ENCODE measurements at regions of chr22 and their contacts with region 1.

Region 1: GRCh38 chr22:39003165-39003638 is 10.9 kb upstream of the APOBEC3C start:
- DNase-seq: peak; percentile 54 to 69
- ATAC-seq: peak; percentile 83 to 94 (median 92)
- H3K4me3 ChIP-seq: no peak overlapping the region
- H3K27ac ChIP-seq: no peak overlapping the region
- H3K4me1 ChIP-seq: peaks cover 0 to 9% (median 7%) of the 10 kb centered on the region in 9 donors
- H3K27me3 ChIP-seq: peaks cover 0 to 11% (median 0%) of the 10 kb centered on the region in 7 donors
- CTCF ChIP-seq: peak; percentile 59 to 88 (median 79)

Region 2: GRCh38 chr22:38753948-38754750 is 249.1 kb before region 1 on chr22:
- intact Hi-C with region 1: no loop called
- DNase-seq: peak in 1 of 2 donors; percentile 57
- ATAC-seq: peak in 6 of 8 donors; percentile 5 to 43 (median 38)
- H3K4me3 ChIP-seq: peak overlapping the region; percentile 36 to 82 (median 71)
- H3K27ac ChIP-seq: peak overlapping the region; percentile 93 to 99 (median 96)
- H3K4me1 ChIP-seq: peaks cover 2 to 73% (median 29%) of the 10 kb centered on the region in 9 donors
- H3K27me3 ChIP-seq: no peaks in the 10 kb centered on the region
- CTCF ChIP-seq: no peak

Region 3: GRCh38 chr22:38766076-38766777 is 237.0 kb before region 1 on chr22:
- intact Hi-C with region 1: loop called in 7 of 10 experiments (anchors 2 to 10 kb)
- DNase-seq: peak in 1 of 2 donors; percentile 41
- ATAC-seq: peak in 3 of 8 donors; percentile 18 to 52 (median 37)
- H3K4me3 ChIP-seq: no peak overlapping the region
- H3K27ac ChIP-seq: no peak overlapping the region
- H3K4me1 ChIP-seq: peaks cover 0 to 4% (median 0%) of the 10 kb centered on the region in 9 donors
- H3K27me3 ChIP-seq: peaks cover 0 to 7% (median 0%) of the 10 kb centered on the region in 7 donors
- CTCF ChIP-seq: peak; percentile 28 to 74 (median 64)

Region 4: GRCh38 chr22:38777087-38777671 is 226.0 kb before region 1 on chr22:
- intact Hi-C with region 1: loop called in 1 of 10 experiments (anchors 5 kb)
- DNase-seq: no peak
- ATAC-seq: no peak
- H3K4me3 ChIP-seq: no peak overlapping the region
- H3K27ac ChIP-seq: no peak overlapping the region
- H3K4me1 ChIP-seq: peaks cover 4 to 22% (median 18%) of the 10 kb centered on the region in 9 donors
- H3K27me3 ChIP-seq: no peaks in the 10 kb centered on the region
- CTCF ChIP-seq: no peak

Region 5: GRCh38 chr22:38981992-38982927 is 20.9 kb before region 1 on chr22 and contains the start of gene APOBEC3B:
- intact Hi-C with region 1: no loop called
- DNase-seq: peak; percentile 30 to 90
- ATAC-seq: peak; percentile 96 to 99 (median 99)
- H3K4me3 ChIP-seq: peak within 1 kb of the TSS in 9 of 10 donors; percentile 28 to 64 (median 54)
- H3K27ac ChIP-seq: peak within 1 kb of the TSS in 6 of 10 donors; percentile 30 to 82 (median 35)
- H3K4me1 ChIP-seq: peaks cover 0 to 30% (median 12%) of the 10 kb centered on the region in 9 donors
- H3K27me3 ChIP-seq: no peaks in the 10 kb centered on the region
- CTCF ChIP-seq: no peak
- total RNA-seq, gene APOBEC3B: 0.55 to 6.4 (median 1.3) TPM

Region 6: DNA sequence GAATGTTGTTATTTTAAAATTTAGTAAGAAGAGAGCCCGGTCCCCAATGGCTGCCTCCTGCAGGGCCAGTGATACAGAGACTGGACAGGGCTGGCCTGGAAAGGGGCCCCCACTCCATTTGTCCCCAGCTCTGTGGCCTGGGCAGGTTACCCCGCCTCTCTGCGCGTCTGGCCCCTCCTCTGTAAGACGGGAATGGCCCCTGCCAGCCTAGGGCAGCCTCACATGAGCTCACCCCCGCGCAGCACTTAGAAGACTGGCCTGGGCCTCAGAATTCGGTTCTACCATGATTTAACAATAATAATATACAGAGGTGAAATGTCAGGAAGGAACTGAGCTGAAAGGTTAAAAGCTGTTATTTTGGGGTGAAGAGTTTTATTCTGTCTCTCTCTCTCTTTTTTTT is 75.1 kb after region 1 on chr22:
- intact Hi-C with region 1: loop called in 1 of 10 experiments (anchors 10 kb)
- DNase-seq: no peak
- ATAC-seq: no peak
- H3K4me3 ChIP-seq: peak overlapping the region in 2 of 10 donors; percentile 66 to 67
- H3K27ac ChIP-seq: peak overlapping the region in 1 of 10 donors; percentile 94
- H3K4me1 ChIP-seq: peaks cover 0 to 12% (median 12%) of the 10 kb centered on the region in 9 donors
- H3K27me3 ChIP-seq: no peaks in the 10 kb centered on the region
- CTCF ChIP-seq: no peak

Region 7: GRCh38 chr22:39117585-39118191 is 114.5 kb after region 1 on chr22:
- intact Hi-C with region 1: loop called in 8 of 10 experiments (anchors 5 to 10 kb)
- DNase-seq: peak in 1 of 2 donors; percentile 32
- ATAC-seq: no peak
- H3K4me3 ChIP-seq: no peak overlapping the region
- H3K27ac ChIP-seq: peak overlapping the region in 1 of 10 donors; percentile 59
- H3K4me1 ChIP-seq: peaks cover 0 to 13% (median 0%) of the 10 kb centered on the region in 9 donors
- H3K27me3 ChIP-seq: peaks cover 0 to 49% (median 23%) of the 10 kb centered on the region in 7 donors
- CTCF ChIP-seq: peak; percentile 8 to 57 (median 46)

Region 8: DNA sequence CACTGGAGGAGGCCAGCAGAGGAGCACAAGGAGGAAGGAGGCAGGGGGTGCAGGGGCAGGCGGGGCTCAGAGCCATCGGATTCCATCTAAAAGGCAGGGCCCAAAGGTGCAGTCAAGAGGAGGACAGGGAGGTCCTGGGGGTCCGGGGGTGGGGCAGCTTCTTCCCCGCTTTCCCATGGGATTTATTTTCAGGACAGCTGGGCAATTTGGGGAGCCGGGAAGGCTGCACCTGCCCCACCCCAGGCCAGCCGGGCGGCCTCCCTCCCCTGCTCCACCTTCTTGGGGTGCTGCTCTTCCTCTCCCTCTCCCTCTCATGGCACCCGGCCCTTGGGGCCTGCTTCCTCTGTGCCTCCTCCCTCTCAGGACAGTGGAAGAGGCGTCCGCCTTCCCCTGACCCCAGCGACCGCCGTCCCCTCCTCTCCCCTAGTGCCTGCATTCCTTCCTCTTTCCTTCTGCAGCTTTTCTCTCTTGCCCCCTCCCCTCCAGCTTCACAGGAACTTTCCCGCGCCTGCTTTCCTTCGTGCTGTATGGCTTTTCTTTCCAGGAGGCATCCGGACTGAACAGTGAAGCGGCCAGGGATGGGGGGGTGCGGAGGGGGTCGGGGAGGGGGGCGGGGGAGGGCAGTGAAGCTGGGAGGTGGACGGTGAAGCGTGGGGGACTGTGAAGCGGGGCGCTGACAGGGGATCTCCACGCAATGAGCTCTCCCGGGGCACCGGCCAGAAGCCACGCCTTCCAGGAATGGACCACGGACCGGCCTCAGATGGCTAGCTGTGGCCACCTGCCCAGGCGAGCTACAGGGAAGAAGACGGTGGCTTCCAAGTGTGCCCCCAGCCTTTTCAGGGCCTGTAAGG is 120.8 kb after region 1 on chr22:
- intact Hi-C with region 1: loop called in 8 of 10 experiments (anchors 5 to 10 kb)
- DNase-seq: no peak
- ATAC-seq: peak in 3 of 8 donors; percentile 23 to 35 (median 32)
- H3K4me3 ChIP-seq: no peak overlapping the region
- H3K27ac ChIP-seq: no peak overlapping the region
- H3K4me1 ChIP-seq: peaks cover 0 to 2% (median 0%) of the 10 kb centered on the region in 9 donors
- H3K27me3 ChIP-seq: no peaks in the 10 kb centered on the region
- CTCF ChIP-seq: no peak

Measured in heart right ventricle (tissue), 16 donors.